A549 (cell line): ENCODE measurements at regions of chr16 and their contacts with region 1.

Region 1: DNA sequence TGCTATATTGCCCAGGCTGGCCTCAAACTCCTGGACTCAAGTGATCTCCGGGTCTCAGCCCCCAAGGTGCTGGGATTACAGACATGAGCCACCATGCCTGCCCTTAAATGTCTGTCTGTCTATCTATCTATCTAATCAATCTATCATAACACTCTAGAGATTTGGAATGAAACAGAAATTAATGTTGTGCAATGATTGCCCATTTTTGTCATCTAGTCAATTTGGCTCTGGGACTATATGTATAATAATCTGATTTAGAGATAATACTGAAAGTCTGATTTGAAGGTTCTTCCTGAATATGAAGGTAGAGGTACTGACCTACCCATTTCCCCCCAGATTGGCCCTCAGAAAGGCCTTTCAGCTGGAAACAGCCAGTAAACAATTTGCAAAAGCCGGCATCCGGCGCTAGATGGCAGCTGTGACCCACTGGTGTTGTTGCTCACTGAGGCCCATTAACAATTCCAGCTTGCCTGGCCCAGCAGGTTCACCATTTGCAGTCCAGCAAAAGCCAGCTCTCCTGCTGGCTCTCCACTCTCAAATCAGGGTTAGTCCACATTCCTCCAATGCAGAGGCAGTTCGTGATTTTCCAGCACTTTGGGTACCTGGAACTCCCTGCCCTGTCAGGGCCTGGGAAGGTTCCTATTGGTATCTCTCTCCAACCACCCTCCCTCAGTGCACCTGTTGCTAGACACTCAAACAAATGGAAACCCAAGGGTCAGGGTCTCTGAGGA is 22.9 kb upstream of the C16orf87 start:
- DNase-seq: peak; percentile 74 to 75
- ATAC-seq: peak; percentile 91
- H3K4me3 ChIP-seq: no peak overlapping the region
- H3K27ac ChIP-seq: no peak overlapping the region
- H3K4me1 ChIP-seq: no peaks in the 10 kb centered on the region
- CTCF ChIP-seq: peak; percentile 93
- EP300 ChIP-seq: no peak
- POLR2A ChIP-seq: no peak
- RAD21 ChIP-seq: peak; percentile 94 to 96

Region 2: GRCh38 chr16:46873201-46873600 is 19.3 kb after region 1 on chr16:
- CTCF ChIA-PET with region 1: interaction called, 11 read pairs
- POLR2A ChIA-PET with region 1: no interaction called
- DNase-seq: no peak
- ATAC-seq: no peak
- H3K4me3 ChIP-seq: no peak overlapping the region
- H3K27ac ChIP-seq: no peak overlapping the region
- H3K4me1 ChIP-seq: peaks cover 20% of the 10 kb centered on the region; the same call in 2 of the 3 replicates
- CTCF ChIP-seq: no peak
- EP300 ChIP-seq: no peak
- POLR2A ChIP-seq: no peak
- RAD21 ChIP-seq: no peak

Region 3: GRCh38 chr16:46889942-46890300 is 36.0 kb after region 1 on chr16:
- CTCF ChIA-PET with region 1: interaction called, 47 read pairs
- POLR2A ChIA-PET with region 1: no interaction called
- DNase-seq: no peak
- ATAC-seq: no peak
- H3K4me3 ChIP-seq: no peak overlapping the region
- H3K27ac ChIP-seq: no peak overlapping the region
- H3K4me1 ChIP-seq: peaks cover 10% of the 10 kb centered on the region; the same call in 1 of the 3 replicates
- CTCF ChIP-seq: no peak
- EP300 ChIP-seq: no peak
- POLR2A ChIP-seq: no peak
- RAD21 ChIP-seq: no peak

Region 4: GRCh38 chr16:46908540-46909372 is 54.9 kb after region 1 on chr16:
- CTCF ChIA-PET with region 1: interaction called, 202 read pairs
- POLR2A ChIA-PET with region 1: no interaction called
- DNase-seq: peak; percentile 60 to 71
- ATAC-seq: peak; percentile 45 to 88; a peak in 3 of 6 replicates
- H3K4me3 ChIP-seq: no peak overlapping the region
- H3K27ac ChIP-seq: no peak overlapping the region
- H3K4me1 ChIP-seq: no peaks in the 10 kb centered on the region
- CTCF ChIP-seq: peak; percentile 90
- EP300 ChIP-seq: no peak
- POLR2A ChIP-seq: no peak
- RAD21 ChIP-seq: peak; percentile 67 to 77

Region 5: DNA sequence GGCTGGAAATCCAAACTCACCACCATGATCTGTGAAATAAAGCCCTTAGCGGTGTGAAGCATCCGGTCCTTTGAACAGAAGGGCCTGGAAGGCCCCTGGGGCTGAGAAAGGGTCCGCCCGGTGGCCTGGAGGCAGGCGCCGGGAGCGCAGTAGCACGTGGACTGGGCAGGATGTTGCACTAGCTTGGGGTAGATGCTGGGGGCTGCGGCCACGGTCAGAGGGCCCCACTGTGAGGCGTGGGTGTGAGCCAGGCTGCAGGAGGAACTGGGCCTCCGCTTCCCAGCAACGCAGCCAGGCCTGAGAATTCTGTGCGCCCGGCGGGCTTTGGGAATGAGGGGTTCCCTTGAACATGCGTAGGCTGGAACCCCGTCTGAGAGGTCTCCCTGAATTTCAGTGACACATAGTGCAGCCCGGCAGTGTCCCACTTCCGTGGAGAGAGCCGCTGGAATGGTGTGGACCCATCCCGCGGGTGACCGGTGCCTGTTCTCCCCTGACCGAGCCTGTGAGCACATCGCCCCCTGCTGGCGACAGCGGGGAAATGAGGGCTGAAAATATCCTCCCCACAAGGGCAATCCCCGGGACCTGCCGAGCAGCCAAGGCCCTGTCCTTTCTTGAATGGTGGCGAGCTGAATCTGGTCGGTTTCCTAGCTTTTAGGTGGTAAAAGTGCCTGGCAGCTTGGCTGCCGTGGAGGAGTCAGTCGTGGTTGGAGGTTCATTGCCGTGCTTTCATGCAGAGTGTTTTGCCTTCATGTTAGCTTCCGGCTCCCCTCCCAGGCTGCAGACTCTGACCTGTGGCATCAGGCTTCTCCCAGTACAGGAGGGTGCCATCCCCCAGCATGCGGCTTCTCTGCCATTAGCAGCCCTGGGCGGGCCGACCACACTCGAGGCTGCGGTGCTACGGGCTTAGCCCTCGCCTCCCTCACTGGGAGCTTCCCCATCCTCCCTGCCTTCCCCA is 75.8 kb after region 1 on chr16:
- CTCF ChIA-PET with region 1: interaction called, 82 read pairs
- POLR2A ChIA-PET with region 1: no interaction called
- DNase-seq: peak; percentile 62 to 81
- ATAC-seq: peak; percentile 86 to 96
- H3K4me3 ChIP-seq: no peak overlapping the region
- H3K27ac ChIP-seq: no peak overlapping the region
- H3K4me1 ChIP-seq: no peaks in the 10 kb centered on the region
- CTCF ChIP-seq: peak; percentile 83
- EP300 ChIP-seq: no peak
- POLR2A ChIP-seq: no peak
- RAD21 ChIP-seq: peak; percentile 67 to 68

Region 6: GRCh38 chr16:47258874-47259461 is 405.1 kb after region 1 on chr16:
- CTCF ChIA-PET with region 1: no interaction called
- POLR2A ChIA-PET with region 1: no interaction called
- DNase-seq: peak; percentile 44 to 52
- ATAC-seq: peak; percentile 69 to 70; a peak in 4 of 6 replicates
- H3K4me3 ChIP-seq: no peak overlapping the region
- H3K27ac ChIP-seq: no peak overlapping the region
- H3K4me1 ChIP-seq: no peaks in the 10 kb centered on the region
- CTCF ChIP-seq: peak; percentile 56
- EP300 ChIP-seq: no peak
- POLR2A ChIP-seq: no peak
- RAD21 ChIP-seq: peak; percentile 49 to 55; a peak in 4 of 5 replicates